Activated CD4-positive, alpha-beta T cell treated with anti-CD3 and anti-CD28 coated beads, Interleukin-2, amount 10 ng/mL, durations not matched to agents 24 days and 14 days (primary cell): ENCODE measurements at regions of chr18 and their contacts with region 1.

Region 1: GRCh38 chr18:24456549-24456948 is 3.9 kb upstream of the HRH4 start:
- DNase-seq: no peak
- H3K4me3 Mint-ChIP-seq: no peak overlapping the region
- H3K27ac Mint-ChIP-seq: peak overlapping the region; percentile 70
- H3K4me1 Mint-ChIP-seq: peaks cover 26% of the 10 kb centered on the region
- H3K27me3 Mint-ChIP-seq: no peaks in the 10 kb centered on the region

Region 2: GRCh38 chr18:24368749-24369148 is 87.8 kb before region 1 on chr18:
- intact Hi-C with region 1: loop called (anchors 1 kb)
- DNase-seq: peak; percentile 78
- H3K4me3 Mint-ChIP-seq: peak overlapping the region; percentile 28
- H3K27ac Mint-ChIP-seq: peak overlapping the region; percentile 75
- H3K4me1 Mint-ChIP-seq: peaks cover 39% of the 10 kb centered on the region
- H3K27me3 Mint-ChIP-seq: no peaks in the 10 kb centered on the region

Region 3: GRCh38 chr18:24436939-24437338 is 19.6 kb before region 1 on chr18:
- intact Hi-C with region 1: loop called (anchors 2 kb)
- DNase-seq: no peak
- H3K4me3 Mint-ChIP-seq: no peak overlapping the region
- H3K27ac Mint-ChIP-seq: peak overlapping the region; percentile 16
- H3K4me1 Mint-ChIP-seq: peaks cover 5% of the 10 kb centered on the region
- H3K27me3 Mint-ChIP-seq: no peaks in the 10 kb centered on the region

Region 4: GRCh38 chr18:24475926-24476589 is 19.5 kb after region 1 on chr18:
- intact Hi-C with region 1: loop called (anchors 2 kb)
- DNase-seq: no peak
- H3K4me3 Mint-ChIP-seq: no peak overlapping the region
- H3K27ac Mint-ChIP-seq: no peak overlapping the region
- H3K4me1 Mint-ChIP-seq: peaks cover 3% of the 10 kb centered on the region
- H3K27me3 Mint-ChIP-seq: peaks cover 31% of the 10 kb centered on the region